ENCODE measurements at regions of chr16 and their contacts with region 1.

Region 1: GRCh38 chr16:27387724-27388123 is 14.2 kb upstream of the IL21R start:
- DNase-seq: no peak
- ATAC-seq: no peak
- H3K4me3 Mint-ChIP-seq: no peak overlapping the region
- H3K27ac Mint-ChIP-seq: no peak overlapping the region
- H3K4me1 Mint-ChIP-seq: peaks cover 1% of the 10 kb centered on the region
- H3K27me3 Mint-ChIP-seq: no peaks in the 10 kb centered on the region

Region 2: GRCh38 chr16:27347930-27348685 is 39.6 kb before region 1 on chr16:
- POLR2A ChIA-PET with region 1: no interaction called
- DNase-seq: no peak
- ATAC-seq: no peak
- H3K4me3 Mint-ChIP-seq: no peak overlapping the region
- H3K27ac Mint-ChIP-seq: peak overlapping the region; percentile 70
- H3K4me1 Mint-ChIP-seq: peaks cover 13% of the 10 kb centered on the region
- H3K27me3 Mint-ChIP-seq: no peaks in the 10 kb centered on the region

Region 3: GRCh38 chr16:27374804-27375425 is 12.8 kb before region 1 on chr16:
- POLR2A ChIA-PET with region 1: interaction called, 10 read pairs
- DNase-seq: peak; percentile 58
- ATAC-seq: peak; percentile 33
- H3K4me3 Mint-ChIP-seq: no peak overlapping the region
- H3K27ac Mint-ChIP-seq: no peak overlapping the region
- H3K4me1 Mint-ChIP-seq: peaks cover 27% of the 10 kb centered on the region
- H3K27me3 Mint-ChIP-seq: no peaks in the 10 kb centered on the region

Region 4: GRCh38 chr16:27475561-27475960 is 87.8 kb after region 1 on chr16:
- POLR2A ChIA-PET with region 1: no interaction called
- DNase-seq: no peak
- ATAC-seq: no peak
- H3K4me3 Mint-ChIP-seq: no peak overlapping the region
- H3K27ac Mint-ChIP-seq: no peak overlapping the region
- H3K4me1 Mint-ChIP-seq: no peaks in the 10 kb centered on the region
- H3K27me3 Mint-ChIP-seq: no peaks in the 10 kb centered on the region

Measured in activated naive CD8-positive, alpha-beta T cell treated with anti-CD3 and anti-CD28 coated beads, Interleukin-2, amount 10 ng/mL, durations not matched to agents 7 days and 5 days (primary cell).